ENCODE measurements at regions of chr16 and their contacts with region 1.

Region 1: GRCh38 chr16:74596586-74596985 is 10.3 kb downstream of the GLG1 start:
- DNase-seq: no peak
- H3K4me3 ChIP-seq: no peak overlapping the region
- CTCF ChIP-seq: no peak
- POLR2A ChIP-seq: no peak

Region 2: GRCh38 chr16:74046527-74046926 is 550.1 kb before region 1 on chr16:
- intact Hi-C with region 1: loop called (anchors 5 kb)
- DNase-seq: no peak
- H3K4me3 ChIP-seq: no peak overlapping the region
- CTCF ChIP-seq: no peak
- POLR2A ChIP-seq: no peak

Measured in lower leg skin (tissue), 4 donors.